Vagina (tissue), 2 donors: ENCODE measurements at regions of chr12 and their contacts with region 1.

Region 1: DNA sequence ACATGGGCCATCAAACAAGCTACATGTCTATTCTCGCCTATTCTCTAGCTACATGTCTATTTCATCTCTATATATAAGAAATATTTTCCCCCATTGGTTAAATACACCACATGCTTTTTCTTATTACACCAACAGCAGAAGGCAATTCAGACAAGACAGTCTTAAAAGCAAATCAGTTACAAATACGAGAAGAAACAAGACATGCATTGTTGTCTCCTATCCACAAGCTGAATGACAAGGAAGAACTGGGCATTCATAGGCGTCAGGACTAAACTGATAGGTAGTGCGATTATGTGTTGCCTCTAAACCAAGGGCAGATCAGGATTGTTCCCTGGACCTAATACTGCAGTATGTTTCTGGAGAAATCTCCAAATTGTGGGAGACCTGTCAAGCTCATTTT is 19.4 kb downstream of the SLC2A13 start:
- DNase-seq: no peak
- H3K4me3 ChIP-seq: no peak overlapping the region
- H3K27ac ChIP-seq: no peak overlapping the region
- H3K4me1 ChIP-seq: no peaks in the 10 kb centered on the region
- H3K27me3 ChIP-seq: no peaks in the 10 kb centered on the region
- CTCF ChIP-seq: no peak
- POLR2A ChIP-seq: no peak

Region 2: GRCh38 chr12:40063414-40063813 is 23.1 kb before region 1 on chr12:
- intact Hi-C with region 1: loop called (anchors 1 kb)
- DNase-seq: no peak
- H3K4me3 ChIP-seq: no peak overlapping the region
- H3K27ac ChIP-seq: no peak overlapping the region
- H3K4me1 ChIP-seq: peaks cover 6% of the 10 kb centered on the region
- H3K27me3 ChIP-seq: no peaks in the 10 kb centered on the region
- CTCF ChIP-seq: no peak
- POLR2A ChIP-seq: no peak